ENCODE measurements at regions of chr11 and their contacts with region 1.

Region 1: GRCh38 chr11:10933455-10934292 is 75.8 kb upstream of the ZBED5 start:
- H3K4me3 Mint-ChIP-seq: peak overlapping the region; percentile 60
- H3K27ac Mint-ChIP-seq: peak overlapping the region; percentile 72
- H3K4me1 Mint-ChIP-seq: peaks cover 62% of the 10 kb centered on the region
- H3K27me3 Mint-ChIP-seq: peaks cover 22% of the 10 kb centered on the region

Region 2: GRCh38 chr11:10688401-10688800 is 245.3 kb before region 1 on chr11:
- intact Hi-C with region 1: no loop called
- H3K4me3 Mint-ChIP-seq: no peak overlapping the region
- H3K27ac Mint-ChIP-seq: no peak overlapping the region
- H3K4me1 Mint-ChIP-seq: no peaks in the 10 kb centered on the region
- H3K27me3 Mint-ChIP-seq: peaks cover 40% of the 10 kb centered on the region

Region 3: DNA sequence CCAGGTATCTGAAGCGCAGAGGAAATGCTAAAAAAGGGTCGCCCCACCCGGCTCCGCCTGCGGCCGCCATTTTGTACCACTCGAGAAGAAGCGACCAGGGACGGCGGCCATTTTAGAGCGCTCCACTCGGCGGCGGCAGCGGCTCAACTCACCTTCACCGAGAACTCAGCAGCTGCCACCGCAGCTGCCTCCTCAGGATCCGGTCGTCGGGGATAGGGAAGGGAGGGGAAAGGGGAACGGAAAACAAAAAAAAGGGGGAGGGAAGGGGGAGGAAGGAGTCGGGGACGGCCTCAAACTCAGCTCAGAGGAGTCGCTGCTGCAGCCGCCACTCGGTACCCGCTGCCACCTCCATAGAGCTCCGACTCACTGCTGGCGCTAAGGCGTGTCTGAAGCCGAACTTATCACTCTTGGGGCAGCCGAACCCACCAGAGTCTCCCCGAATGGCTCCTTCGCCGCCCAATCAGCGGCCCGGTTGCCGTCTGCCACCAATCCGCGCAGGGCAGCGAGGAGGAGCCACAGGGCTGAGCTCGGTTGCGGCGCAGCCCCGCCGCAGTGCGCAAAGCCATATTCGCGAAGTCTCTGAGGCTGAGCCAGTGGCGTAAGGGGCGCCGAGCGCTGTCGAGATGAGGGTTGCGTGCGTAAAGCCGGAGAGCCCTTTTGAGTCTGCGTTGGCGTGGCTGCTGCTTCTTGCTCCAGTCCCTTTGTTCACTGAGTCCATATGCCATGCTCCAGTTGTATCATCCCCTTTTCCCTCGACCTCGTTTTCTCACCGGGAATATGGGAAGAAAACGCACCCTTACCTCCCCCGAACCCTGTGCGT is 124.9 kb before region 1 on chr11 and contains the start of gene EIF4G2:
- intact Hi-C with region 1: loop called (anchors 5 kb)
- H3K4me3 Mint-ChIP-seq: peak within 1 kb of the TSS; percentile 92
- H3K27ac Mint-ChIP-seq: peak within 1 kb of the TSS; percentile 99
- H3K4me1 Mint-ChIP-seq: peaks cover 38% of the 10 kb centered on the region
- H3K27me3 Mint-ChIP-seq: peaks cover 3% of the 10 kb centered on the region

Region 4: GRCh38 chr11:10878408-10879214 is 55.1 kb before region 1 on chr11:
- intact Hi-C with region 1: loop called (anchors 5 kb)
- H3K4me3 Mint-ChIP-seq: no peak overlapping the region
- H3K27ac Mint-ChIP-seq: peak overlapping the region; percentile 48
- H3K4me1 Mint-ChIP-seq: peaks cover 28% of the 10 kb centered on the region
- H3K27me3 Mint-ChIP-seq: no peaks in the 10 kb centered on the region

Region 5: DNA sequence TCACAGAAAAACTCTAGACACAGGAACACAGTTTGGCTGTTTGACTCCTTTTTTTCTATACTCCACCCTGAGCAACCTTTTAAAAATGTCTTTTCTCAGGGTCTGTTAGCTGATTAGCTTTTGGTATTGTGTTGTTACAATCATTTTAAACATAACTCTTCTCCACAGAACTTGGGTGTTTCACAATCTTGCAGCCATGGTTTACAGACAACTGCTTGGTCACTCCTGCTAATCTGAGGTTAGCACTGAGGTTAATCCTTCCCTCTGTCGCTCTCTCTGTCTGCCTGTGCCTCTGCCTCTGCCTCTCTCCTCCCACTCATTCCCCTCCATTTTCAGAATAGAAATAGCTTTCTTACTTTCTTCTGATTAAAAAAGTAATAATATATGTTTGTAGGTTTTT is 13.5 kb before region 1 on chr11:
- intact Hi-C with region 1: no loop called
- H3K4me3 Mint-ChIP-seq: no peak overlapping the region
- H3K27ac Mint-ChIP-seq: no peak overlapping the region
- H3K4me1 Mint-ChIP-seq: peaks cover 25% of the 10 kb centered on the region
- H3K27me3 Mint-ChIP-seq: no peaks in the 10 kb centered on the region

Region 6: DNA sequence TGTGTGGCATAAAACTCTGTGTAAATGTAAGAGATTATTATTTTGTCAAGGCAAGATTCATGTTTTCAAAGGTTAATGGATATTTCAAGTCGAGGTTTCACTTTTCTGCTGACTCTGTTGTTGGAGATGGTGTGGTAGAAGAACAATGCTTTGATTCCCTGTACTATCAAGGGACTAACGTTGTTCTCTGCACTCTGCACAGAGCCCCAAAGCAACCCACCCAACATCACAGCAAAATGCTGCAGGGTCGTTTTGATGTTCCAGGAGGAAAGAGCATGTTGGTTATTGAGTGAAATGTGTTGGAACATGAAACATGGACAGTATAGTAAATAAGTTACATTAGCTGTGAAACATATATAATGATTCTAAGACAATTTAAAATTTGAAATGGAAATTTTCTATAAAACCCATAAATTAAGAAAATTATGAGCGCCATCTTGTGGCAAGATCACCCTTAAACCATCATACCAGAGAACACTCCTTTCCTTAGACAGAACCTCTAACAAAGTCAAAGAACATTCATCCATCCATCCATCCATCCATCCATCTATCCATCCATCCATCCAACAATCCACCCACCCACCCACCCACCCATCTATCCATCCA is 88.6 kb after region 1 on chr11:
- intact Hi-C with region 1: loop called (anchors 1 kb)
- H3K4me3 Mint-ChIP-seq: no peak overlapping the region
- H3K27ac Mint-ChIP-seq: no peak overlapping the region
- H3K4me1 Mint-ChIP-seq: peaks cover 33% of the 10 kb centered on the region
- H3K27me3 Mint-ChIP-seq: peaks cover 6% of the 10 kb centered on the region

Measured in dendritic cell treated with granulocyte-macrophage colony-stimulating factor and Interleukin-4, amounts not matched to agents 40 ng/mL and 50 ng/mL, for 4 days (primary cell).